Aorta (tissue), 5 donors: ENCODE measurements at regions of chr15 and their contacts with region 1.

Region 1: GRCh38 chr15:49046220-49047102 is at the start of gene SECISBP2L:
- DNase-seq: peak; percentile 96 to 97
- ATAC-seq: peak; percentile 97
- H3K4me3 ChIP-seq: peak within 1 kb of the TSS; percentile 53 to 78
- H3K27ac ChIP-seq: peak within 1 kb of the TSS; percentile 1 to 68
- H3K4me1 ChIP-seq: no peaks in the 10 kb centered on the region
- H3K27me3 ChIP-seq: no peaks in the 10 kb centered on the region
- total RNA-seq, gene SECISBP2L: 78.7 to 82.2 TPM

Region 2: DNA sequence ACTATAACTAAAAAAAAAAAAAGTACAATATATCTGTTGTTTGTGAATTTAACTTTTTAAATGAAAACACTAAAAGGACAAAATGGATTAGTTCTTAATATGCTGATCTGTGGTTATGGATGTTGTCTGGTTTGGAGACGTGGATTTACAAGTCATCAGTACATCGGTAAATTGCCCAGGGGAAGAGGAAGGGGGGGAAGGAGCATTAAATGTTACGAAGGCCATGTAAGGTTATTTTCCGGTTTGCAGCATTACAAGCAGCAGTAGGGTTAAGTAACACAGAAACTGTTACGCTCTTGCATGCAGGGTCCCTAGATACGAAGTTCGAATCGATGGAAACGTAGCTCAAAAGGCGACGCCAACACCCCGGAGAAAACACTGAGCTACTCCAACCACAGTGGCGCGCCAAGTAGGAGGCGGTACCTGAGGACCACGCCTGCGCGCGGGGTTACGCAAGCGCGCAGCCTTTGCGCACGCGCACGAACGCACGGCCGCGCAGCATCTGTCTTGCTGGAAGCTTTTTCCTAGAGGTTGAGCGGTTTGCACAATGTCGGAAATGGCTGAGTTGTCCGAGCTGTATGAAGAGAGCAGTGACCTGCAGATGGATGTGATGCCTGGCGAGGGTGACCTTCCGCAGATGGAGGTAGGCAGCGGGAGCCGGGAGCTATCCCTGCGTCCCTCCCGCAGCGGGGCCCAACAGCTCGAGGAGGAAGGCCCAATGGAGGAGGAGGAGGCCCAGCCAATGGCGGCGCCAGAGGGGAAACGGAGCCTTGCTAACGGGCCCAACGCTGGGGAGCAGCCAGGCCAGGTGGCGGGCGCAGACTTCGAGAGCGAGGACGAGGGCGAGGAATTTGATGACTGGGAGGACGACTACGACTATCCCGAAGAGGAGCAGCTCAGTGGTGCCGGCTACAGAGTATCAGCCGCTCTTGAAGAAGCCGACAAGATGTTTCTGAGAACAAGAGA is 168.5 kb before region 1 on chr15 and contains the start of gene EID1:
- intact Hi-C with region 1: loop called in 1 of 2 experiments (anchors 10 kb)
- DNase-seq: peak; percentile 94 to 96
- ATAC-seq: peak; percentile 100
- H3K4me3 ChIP-seq: peak within 1 kb of the TSS; percentile 50 to 69
- H3K27ac ChIP-seq: peak within 1 kb of the TSS in 1 of 2 donors; percentile 79
- H3K4me1 ChIP-seq: peaks cover 0 to 5% of the 10 kb centered on the region in 2 donors
- H3K27me3 ChIP-seq: no peaks in the 10 kb centered on the region
- total RNA-seq, gene EID1: 152 to 169 TPM

Region 3: DNA sequence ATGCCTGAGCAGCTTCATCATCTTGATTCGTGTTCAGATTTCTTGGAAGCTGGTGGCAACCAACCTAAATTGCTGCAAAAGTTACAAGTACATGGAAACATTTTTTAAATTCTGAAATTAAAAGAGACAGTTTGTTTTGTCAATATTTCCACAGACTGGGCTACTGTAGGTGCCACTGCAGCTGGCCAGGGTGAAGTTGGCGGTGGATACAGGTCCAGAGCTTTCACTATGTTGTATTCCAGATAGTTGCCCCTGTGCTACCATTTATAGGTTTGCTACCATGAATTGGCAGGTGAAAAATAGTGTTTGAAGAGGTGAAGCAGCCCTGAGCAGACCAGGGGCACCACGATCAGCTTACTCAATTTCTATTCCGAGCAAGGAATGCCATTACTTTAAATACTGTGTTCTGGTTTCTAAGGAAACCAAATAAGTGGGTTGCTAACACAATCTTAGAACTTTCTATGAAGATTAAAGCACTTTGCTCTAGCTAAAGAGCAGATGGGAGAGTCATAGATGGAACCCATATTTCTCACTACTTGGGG is 61.6 kb before region 1 on chr15:
- intact Hi-C with region 1: loop called in 1 of 2 experiments (anchors 10 kb)
- DNase-seq: no peak
- ATAC-seq: peak; percentile 72
- H3K4me3 ChIP-seq: no peak overlapping the region
- H3K27ac ChIP-seq: peak overlapping the region; percentile 68 to 95
- H3K4me1 ChIP-seq: peaks cover 2 to 4% of the 10 kb centered on the region in 2 donors
- H3K27me3 ChIP-seq: no peaks in the 10 kb centered on the region

Region 4: GRCh38 chr15:49015896-49016295 is 30.6 kb before region 1 on chr15:
- intact Hi-C with region 1: loop called in 1 of 2 experiments (anchors 5 kb)
- DNase-seq: no peak
- ATAC-seq: no peak
- H3K4me3 ChIP-seq: no peak overlapping the region
- H3K27ac ChIP-seq: no peak overlapping the region
- H3K4me1 ChIP-seq: peaks cover 0 to 3% of the 10 kb centered on the region in 2 donors
- H3K27me3 ChIP-seq: no peaks in the 10 kb centered on the region

Region 5: GRCh38 chr15:49135893-49136292 is 89.4 kb after region 1 on chr15:
- intact Hi-C with region 1: loop called in 1 of 2 experiments (anchors 10 kb)
- DNase-seq: no peak
- ATAC-seq: no peak
- H3K4me3 ChIP-seq: no peak overlapping the region
- H3K27ac ChIP-seq: no peak overlapping the region
- H3K4me1 ChIP-seq: no peaks in the 10 kb centered on the region
- H3K27me3 ChIP-seq: no peaks in the 10 kb centered on the region

Region 6: GRCh38 chr15:49155110-49155833 is 108.8 kb after region 1 on chr15 and contains the start of gene COPS2:
- intact Hi-C with region 1: loop called in 1 of 2 experiments (anchors 5 kb)
- DNase-seq: peak; percentile 94 to 95
- ATAC-seq: peak; percentile 99
- H3K4me3 ChIP-seq: peak within 1 kb of the TSS; percentile 91 to 97
- H3K27ac ChIP-seq: peak within 1 kb of the TSS in 1 of 2 donors; percentile 87
- H3K4me1 ChIP-seq: no peaks in the 10 kb centered on the region
- H3K27me3 ChIP-seq: no peaks in the 10 kb centered on the region
- total RNA-seq, gene COPS2: 60.9 to 69.3 TPM